GM10248 (cell line): ENCODE measurements at regions of chr17 and their contacts with region 1.

Region 1: DNA sequence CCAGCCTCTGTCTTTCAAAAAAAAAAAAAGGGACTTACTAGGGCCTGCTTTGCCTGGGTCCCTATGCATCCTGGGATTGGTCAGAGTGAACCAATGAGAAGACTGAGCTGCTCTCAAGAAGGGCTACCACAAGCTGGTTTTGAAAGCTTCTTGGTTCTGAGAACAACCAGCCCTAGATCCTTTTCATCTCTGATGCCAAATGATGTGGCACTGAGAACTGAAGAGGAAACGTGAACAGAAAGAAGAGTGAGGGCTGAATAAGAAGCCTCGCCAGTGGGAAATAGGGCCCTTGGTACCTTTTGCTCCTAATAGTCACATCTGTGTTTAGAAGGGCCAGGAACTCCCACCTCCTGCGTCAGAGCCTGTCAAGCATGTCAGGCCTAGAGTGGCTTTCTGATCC is 10.7 kb downstream of the TACO1 start:
- DNase-seq: no peak
- CTCF ChIP-seq: no peak

Region 2: GRCh38 chr17:63425482-63425881 is 185.9 kb before region 1 on chr17:
- CTCF ChIA-PET with region 1: interaction called, 120 read pairs
- POLR2A ChIA-PET with region 1: no interaction called
- DNase-seq: peak; percentile 78
- CTCF ChIP-seq: peak; percentile 89

Region 3: DNA sequence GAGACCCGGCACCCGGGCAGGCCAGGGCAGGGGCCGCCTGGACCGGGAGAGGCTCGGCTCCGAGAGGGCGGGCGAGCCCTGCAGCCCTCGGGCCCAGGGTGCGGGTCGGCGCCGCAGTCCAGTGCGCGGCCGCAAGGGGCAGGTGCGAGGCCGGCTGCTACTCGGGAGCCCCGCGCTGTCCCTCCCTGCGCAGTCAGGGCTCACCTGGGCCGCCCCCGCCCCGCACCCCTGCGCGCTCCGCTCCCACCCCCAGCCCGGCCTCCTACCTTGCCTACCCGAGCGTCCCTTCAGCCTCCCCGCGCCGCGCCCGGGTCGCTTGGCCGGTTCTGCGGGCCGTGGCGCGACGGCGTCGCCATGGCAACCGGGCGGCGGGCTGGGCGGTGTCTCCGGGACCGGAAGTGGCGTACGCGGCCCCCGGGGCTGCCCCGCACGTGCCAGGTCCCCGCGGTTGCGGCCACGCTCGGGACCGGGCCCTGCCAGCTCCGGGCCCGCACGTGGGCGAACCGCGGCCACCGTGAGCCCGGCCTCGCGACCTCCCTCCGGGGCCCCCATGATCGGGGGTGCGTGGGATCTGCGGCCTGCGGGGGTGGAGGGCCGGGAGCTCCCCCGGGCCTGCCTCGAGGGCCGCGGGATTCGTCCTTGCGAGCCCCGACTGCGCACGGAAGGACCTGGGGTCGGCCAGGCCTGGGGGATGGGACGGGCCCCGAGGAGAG is 165.2 kb before region 1 on chr17 and contains the start of gene CYB561:
- CTCF ChIA-PET with region 1: interaction called, 15 read pairs
- POLR2A ChIA-PET with region 1: no interaction called
- DNase-seq: peak; percentile 90
- CTCF ChIP-seq: peak; percentile 23

Region 4: DNA sequence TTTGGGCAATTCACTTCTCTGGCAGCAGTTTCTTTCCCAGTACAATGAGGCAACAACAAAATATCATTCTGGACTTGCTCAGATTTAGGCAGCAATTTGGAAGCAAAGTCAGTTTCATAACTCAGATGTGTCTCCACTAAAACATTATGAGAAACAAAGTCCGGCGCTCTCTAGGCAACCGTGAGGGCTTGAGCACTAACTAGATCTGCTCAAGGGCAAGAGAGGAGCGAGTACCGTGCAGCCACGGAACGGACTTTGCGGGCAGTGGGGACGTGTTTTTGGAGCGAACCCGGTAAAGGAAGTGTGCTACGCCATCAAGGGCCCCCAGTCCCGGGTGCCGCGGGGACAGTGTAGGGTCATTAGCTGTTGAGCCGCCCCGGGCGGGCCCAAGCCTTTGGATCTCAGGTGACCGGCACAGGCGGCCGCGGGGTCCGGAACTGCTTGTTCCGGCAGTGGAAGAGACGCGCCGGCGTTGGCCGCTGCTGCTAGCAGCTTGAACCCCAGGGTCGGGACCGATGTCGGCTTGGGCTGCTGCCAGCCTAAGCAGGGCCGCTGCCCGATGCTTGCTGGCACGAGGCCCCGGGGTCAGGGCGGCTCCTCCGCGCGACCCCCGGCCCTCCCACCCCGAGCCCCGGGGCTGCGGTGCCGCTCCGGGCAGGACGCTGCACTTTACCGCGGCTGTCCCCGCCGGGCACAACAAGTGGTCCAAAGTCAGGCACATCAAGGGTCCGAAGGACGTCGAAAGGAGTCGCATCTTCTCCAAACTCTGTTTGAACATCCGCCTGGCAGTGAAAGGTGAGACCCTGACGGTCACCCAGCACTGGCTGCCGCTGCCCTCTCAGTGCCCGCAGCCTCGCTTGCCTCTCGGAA is 10.6 kb before region 1 on chr17 and contains the start of gene TACO1:
- CTCF ChIA-PET with region 1: interaction called, 49 read pairs
- POLR2A ChIA-PET with region 1: no interaction called
- DNase-seq: peak; percentile 88
- CTCF ChIP-seq: no peak

Region 5: DNA sequence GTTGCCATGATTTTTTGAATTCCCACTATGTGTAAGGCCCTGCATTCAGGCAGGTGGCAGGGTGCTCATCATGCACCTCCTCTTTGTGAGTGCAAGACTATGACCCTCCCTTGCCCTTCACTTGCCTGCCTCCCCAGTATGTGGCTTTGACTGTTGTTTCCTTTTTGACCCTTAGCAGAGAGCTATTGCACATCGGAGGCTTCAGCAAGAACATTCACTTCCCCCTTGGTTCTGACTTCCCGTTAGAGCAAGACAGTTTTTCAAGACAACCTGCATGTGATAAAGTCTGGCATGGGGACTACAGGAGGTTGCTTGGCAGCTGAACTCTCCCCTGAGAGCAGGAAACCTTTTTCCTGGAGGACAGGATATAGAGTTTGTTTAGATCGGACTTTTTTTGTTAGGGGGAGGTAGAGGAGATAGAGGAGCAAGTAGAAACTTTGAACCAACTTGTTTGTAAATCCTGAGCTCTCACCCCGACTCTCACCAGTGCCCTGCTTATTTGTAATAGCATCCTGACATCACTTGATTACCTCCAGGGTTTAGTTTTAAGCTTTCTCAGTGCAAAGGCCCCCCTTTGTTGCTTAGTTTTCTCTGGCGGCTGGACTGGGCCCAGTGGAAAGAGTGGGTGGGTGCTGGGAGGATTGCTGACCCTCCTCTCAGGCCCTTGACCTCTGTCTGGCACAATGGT is 54.3 kb after region 1 on chr17:
- CTCF ChIA-PET with region 1: interaction called, 11 read pairs
- POLR2A ChIA-PET with region 1: no interaction called
- DNase-seq: peak; percentile 50
- CTCF ChIP-seq: no peak